ENCODE measurements at regions of chr19 and their contacts with region 1.

Region 1: GRCh38 chr19:48398375-48399235 is 5.1 kb downstream of the GRIN2D start:
- DNase-seq: peak; percentile 77 to 88 (median 86)
- ATAC-seq: peak; percentile 90
- H3K4me3 ChIP-seq: peak overlapping the region; percentile 63
- H3K4me3 Mint-ChIP-seq: peak overlapping the region; percentile 54 to 96 (median 79)
- H3K27ac ChIP-seq: peak overlapping the region; percentile 59
- H3K27ac Mint-ChIP-seq: peak overlapping the region; percentile 22 to 97 (median 85)
- H3K4me1 ChIP-seq: peaks cover 17 to 29% of the 10 kb centered on the region in 2 donors
- H3K4me1 Mint-ChIP-seq: peaks cover 18 to 51% (median 41%) of the 10 kb centered on the region in 7 donors
- H3K27me3 ChIP-seq: peaks cover 9 to 21% of the 10 kb centered on the region in 2 donors
- H3K27me3 Mint-ChIP-seq: peaks cover 15 to 43% (median 31%) of the 10 kb centered on the region in 5 donors

Region 2: GRCh38 chr19:48419158-48419920 is 20.7 kb after region 1 on chr19:
- CTCF ChIA-PET with region 1: no interaction called
- POLR2A ChIA-PET with region 1: interaction called, 4 read pairs
- intact Hi-C with region 1: loop called (anchors 1 to 2 kb)
- DNase-seq: peak; percentile 44 to 77 (median 64)
- ATAC-seq: peak; percentile 79
- H3K4me3 ChIP-seq: peak overlapping the region; percentile 15
- H3K4me3 Mint-ChIP-seq: peak overlapping the region; percentile 60 to 90 (median 80)
- H3K27ac ChIP-seq: no peak overlapping the region
- H3K27ac Mint-ChIP-seq: peak overlapping the region in 6 of 9 donors; percentile 6 to 93 (median 74)
- H3K4me1 ChIP-seq: peaks cover 0 to 5% of the 10 kb centered on the region in 2 donors
- H3K4me1 Mint-ChIP-seq: peaks cover 12 to 30% (median 22%) of the 10 kb centered on the region in 7 donors
- H3K27me3 ChIP-seq: no peaks in the 10 kb centered on the region
- H3K27me3 Mint-ChIP-seq: peaks cover 0 to 22% (median 5%) of the 10 kb centered on the region in 5 donors